Activated CD8-positive, alpha-beta T cell treated with anti-CD3 and anti-CD28 coated beads for 36 hours (primary cell): ENCODE measurements at regions of chr7 and their contacts with region 1.

Region 1: GRCh38 chr7:141533149-141533949 is 17.9 kb upstream of the AGK start:
- DNase-seq: peak; percentile 77
- ATAC-seq: peak; percentile 72
- H3K4me3 Mint-ChIP-seq: no peak overlapping the region
- H3K27ac Mint-ChIP-seq: no peak overlapping the region
- H3K4me1 Mint-ChIP-seq: no peaks in the 10 kb centered on the region
- H3K27me3 Mint-ChIP-seq: peaks cover 12% of the 10 kb centered on the region
- CTCF ChIP-seq: peak; percentile 92

Region 2: DNA sequence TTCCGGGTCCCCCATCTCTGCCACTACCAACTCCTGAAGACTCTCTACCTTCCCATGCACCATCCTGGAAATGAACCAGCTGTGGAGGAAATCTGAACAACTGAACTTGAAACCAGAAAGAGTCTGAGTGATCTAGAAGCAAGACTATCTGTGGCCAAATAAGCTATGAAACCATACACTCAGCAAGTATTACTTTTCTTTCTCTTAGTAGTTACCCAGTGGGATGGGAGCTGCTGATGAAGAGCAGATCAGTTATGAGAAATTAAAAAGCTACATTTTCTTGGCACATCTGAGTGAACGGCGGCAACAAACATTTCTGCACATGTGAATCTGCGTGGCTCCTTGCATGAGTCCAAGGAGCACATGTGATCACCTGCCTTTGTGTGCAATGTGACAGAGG is 13.7 kb before region 1 on chr7:
- CTCF ChIA-PET with region 1: interaction called, 11 read pairs
- POLR2A ChIA-PET with region 1: no interaction called
- intact Hi-C with region 1: no loop called
- DNase-seq: no peak
- ATAC-seq: no peak
- H3K4me3 Mint-ChIP-seq: no peak overlapping the region
- H3K27ac Mint-ChIP-seq: no peak overlapping the region
- H3K4me1 Mint-ChIP-seq: no peaks in the 10 kb centered on the region
- H3K27me3 Mint-ChIP-seq: peaks cover 25% of the 10 kb centered on the region
- CTCF ChIP-seq: no peak

Region 3: DNA sequence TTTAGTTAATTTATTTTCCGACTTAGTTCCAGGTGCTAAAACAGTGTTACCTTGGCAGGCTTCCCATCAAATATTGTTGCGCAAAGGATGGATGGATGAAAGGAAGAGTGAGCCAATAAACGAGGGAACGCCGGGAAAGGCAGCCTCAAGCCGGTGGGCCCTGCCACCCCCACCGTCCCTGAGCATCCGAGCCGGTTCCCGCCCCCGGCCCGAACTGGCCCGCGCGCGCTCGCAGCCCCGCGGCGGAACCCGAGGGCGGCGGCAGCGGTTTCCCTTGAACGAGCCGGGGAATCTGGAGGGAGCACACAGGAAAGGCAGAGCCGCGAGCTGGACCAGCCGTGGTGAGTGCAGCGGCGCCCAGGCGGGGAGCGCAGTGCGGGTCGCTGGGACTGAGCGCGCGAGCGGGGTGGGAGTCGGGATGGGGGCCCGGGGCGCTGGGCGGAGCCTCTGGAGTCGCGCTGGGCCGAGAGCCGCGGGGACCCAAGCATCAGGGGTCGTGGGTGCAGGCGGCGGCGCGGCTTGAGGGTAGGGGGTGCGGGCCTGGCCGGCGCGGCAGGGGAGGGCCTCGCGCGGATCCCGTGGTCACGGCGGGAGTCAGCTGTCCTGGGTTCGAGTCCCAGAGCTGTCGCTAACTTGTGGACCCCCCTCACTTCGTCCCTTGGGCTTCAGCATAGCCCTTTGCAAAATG is 17.9 kb after region 1 on chr7 and contains the start of gene AGK:
- CTCF ChIA-PET with region 1: interaction called, 33 read pairs
- POLR2A ChIA-PET with region 1: no interaction called
- intact Hi-C with region 1: no loop called
- DNase-seq: peak; percentile 78
- ATAC-seq: peak; percentile 95
- H3K4me3 Mint-ChIP-seq: peak within 1 kb of the TSS; percentile 85
- H3K27ac Mint-ChIP-seq: peak within 1 kb of the TSS; percentile 91
- H3K4me1 Mint-ChIP-seq: peaks cover 37% of the 10 kb centered on the region
- H3K27me3 Mint-ChIP-seq: no peaks in the 10 kb centered on the region
- CTCF ChIP-seq: no peak
- total RNA-seq, gene AGK: 70.1 to 73.7 TPM

Region 4: GRCh38 chr7:141563956-141564631 is 30.7 kb after region 1 on chr7:
- CTCF ChIA-PET with region 1: no interaction called
- POLR2A ChIA-PET with region 1: no interaction called
- intact Hi-C with region 1: no loop called
- DNase-seq: peak; percentile 69
- ATAC-seq: peak; percentile 97
- H3K4me3 Mint-ChIP-seq: no peak overlapping the region
- H3K27ac Mint-ChIP-seq: peak overlapping the region; percentile 88
- H3K4me1 Mint-ChIP-seq: peaks cover 65% of the 10 kb centered on the region
- H3K27me3 Mint-ChIP-seq: no peaks in the 10 kb centered on the region
- CTCF ChIP-seq: no peak

Region 5: GRCh38 chr7:141624763-141625162 is 91.4 kb after region 1 on chr7:
- CTCF ChIA-PET with region 1: no interaction called
- POLR2A ChIA-PET with region 1: no interaction called
- intact Hi-C with region 1: no loop called
- DNase-seq: no peak
- ATAC-seq: no peak
- H3K4me3 Mint-ChIP-seq: no peak overlapping the region
- H3K27ac Mint-ChIP-seq: no peak overlapping the region
- H3K4me1 Mint-ChIP-seq: no peaks in the 10 kb centered on the region
- H3K27me3 Mint-ChIP-seq: no peaks in the 10 kb centered on the region
- CTCF ChIP-seq: no peak